ENCODE measurements at regions of chr17 and their contacts with region 1.

Region 1: DNA sequence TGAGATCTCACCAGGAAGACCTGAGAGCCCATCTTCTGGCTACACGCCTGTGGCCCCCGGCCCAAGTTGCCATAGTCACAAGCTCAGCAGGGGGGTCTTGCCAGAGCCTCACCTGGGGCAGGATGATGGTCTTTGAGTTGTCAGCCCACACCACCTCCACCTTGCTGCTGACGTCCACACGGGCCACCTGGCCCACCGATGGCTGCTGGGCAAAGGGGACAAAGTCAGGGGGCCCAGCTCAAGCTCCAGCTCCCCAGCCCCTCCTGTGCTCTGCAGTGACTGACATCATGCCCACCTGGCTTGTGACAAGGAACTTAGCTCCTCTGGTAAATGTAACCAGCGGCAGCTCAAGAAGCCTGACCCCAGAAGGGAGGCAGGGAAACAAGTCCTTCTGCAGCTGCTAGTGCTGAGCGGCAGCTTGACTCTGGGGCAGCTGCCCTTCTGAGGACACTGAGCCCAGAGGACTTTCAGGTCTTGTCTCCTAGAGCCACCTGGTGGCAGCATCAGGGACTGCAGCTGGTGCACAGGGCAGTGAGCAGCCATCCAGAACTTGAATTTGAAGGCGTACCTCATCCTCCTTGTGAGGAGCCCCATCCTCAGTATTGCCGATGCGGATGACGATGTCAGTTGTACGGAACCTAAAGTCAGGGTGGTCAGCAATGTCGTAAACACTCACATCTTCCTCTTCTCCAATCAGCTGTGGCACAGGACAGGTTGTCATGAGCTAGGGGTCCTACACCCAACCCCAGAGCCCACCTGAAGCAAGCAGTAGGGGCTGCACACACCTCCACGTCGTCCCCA is 13.5 kb downstream of the SPHK1 start:
- DNase-seq: peak; percentile 75
- H3K4me3 Mint-ChIP-seq: no peak overlapping the region
- H3K27ac Mint-ChIP-seq: no peak overlapping the region
- H3K4me1 Mint-ChIP-seq: no peaks in the 10 kb centered on the region
- H3K27me3 Mint-ChIP-seq: no peaks in the 10 kb centered on the region

Region 2: GRCh38 chr17:76268015-76268749 is 129.7 kb before region 1 on chr17:
- intact Hi-C with region 1: no loop called
- DNase-seq: peak; percentile 65
- H3K4me3 Mint-ChIP-seq: peak overlapping the region; percentile 91
- H3K27ac Mint-ChIP-seq: peak overlapping the region; percentile 96
- H3K4me1 Mint-ChIP-seq: peaks cover 52% of the 10 kb centered on the region
- H3K27me3 Mint-ChIP-seq: no peaks in the 10 kb centered on the region

Region 3: GRCh38 chr17:76302606-76303005 is 95.3 kb before region 1 on chr17:
- intact Hi-C with region 1: loop called (anchors 1 kb)
- DNase-seq: no peak
- H3K4me3 Mint-ChIP-seq: no peak overlapping the region
- H3K27ac Mint-ChIP-seq: no peak overlapping the region
- H3K4me1 Mint-ChIP-seq: peaks cover 4% of the 10 kb centered on the region
- H3K27me3 Mint-ChIP-seq: no peaks in the 10 kb centered on the region

Region 4: DNA sequence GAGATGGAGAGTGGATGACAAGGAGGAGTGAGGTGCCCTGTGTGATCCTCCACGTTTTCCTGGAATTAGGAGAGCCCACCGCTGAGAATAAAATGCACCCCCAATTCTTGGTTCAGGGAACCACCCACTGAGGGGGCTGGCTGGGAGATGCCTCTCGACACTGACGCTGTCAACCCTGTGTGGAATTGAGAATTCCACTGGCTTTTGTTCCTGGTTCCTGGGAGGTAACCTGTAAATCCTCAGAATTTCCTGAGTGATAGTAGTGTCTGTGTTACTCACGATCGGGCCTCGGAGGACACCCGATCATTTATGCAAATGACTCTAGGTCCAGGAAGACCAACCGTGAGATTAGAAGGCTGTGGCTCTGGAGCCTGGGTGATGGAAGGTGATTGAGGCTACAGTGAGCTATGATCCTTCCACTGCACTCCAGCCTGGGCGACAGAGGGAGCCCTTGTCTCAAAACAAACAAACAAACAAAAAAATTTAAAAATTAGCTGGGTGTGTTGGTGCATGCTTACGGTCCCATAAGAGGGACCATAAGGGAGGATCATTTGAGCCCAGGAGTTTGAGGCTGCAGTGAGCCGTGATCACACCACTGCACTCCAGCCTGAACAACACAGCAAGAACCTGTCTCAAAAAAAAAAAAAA is 32.5 kb before region 1 on chr17:
- intact Hi-C with region 1: no loop called
- DNase-seq: no peak
- H3K4me3 Mint-ChIP-seq: no peak overlapping the region
- H3K27ac Mint-ChIP-seq: no peak overlapping the region
- H3K4me1 Mint-ChIP-seq: no peaks in the 10 kb centered on the region
- H3K27me3 Mint-ChIP-seq: no peaks in the 10 kb centered on the region